ENCODE measurements at regions of chr3 and their contacts with region 1.

Region 1: DNA sequence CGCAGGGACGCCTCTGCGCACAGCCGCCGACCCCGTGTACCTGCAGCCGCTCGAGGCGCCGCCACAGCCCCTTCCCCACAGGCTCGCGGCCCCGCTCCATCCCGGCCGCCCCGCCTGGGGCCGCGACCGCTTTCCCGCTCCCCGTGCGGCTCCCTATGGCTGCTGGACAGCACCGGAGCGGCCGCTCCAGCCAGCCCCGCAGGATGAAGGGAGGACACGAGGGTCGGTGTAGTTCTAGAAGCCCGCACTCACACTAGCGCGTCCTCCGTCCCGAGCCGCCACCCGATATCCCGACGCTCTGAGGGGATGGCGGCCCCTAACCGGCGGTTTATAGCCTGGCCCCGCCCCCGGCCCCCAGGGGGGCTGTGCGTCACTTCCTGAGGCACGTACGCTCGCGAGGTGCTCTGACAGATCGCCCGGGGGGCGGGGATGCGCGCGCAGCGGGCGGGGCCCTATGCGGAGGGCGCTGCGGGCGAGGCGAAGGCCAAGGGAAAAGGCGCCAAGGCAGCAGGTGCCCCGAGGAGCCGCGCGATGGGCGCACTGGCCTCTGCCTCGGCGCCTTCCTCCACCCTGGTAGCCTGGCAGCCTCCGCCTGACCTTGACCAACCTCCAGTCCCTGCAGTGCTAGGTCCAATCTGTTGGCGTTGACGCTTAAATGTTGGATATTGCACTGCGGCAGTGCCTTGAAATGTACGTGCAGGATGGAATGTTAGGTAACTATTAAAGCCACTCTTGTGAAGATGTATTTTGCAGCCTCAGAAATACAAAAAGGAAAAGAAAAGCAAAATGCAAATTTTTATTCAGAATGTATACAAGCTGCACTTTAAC is at the start of gene TFRC:
- DNase-seq: peak; percentile 95
- H3K4me3 Mint-ChIP-seq: peak within 1 kb of the TSS; percentile 100
- H3K27ac Mint-ChIP-seq: peak within 1 kb of the TSS; percentile 98
- H3K4me1 Mint-ChIP-seq: peaks cover 38% of the 10 kb centered on the region
- H3K27me3 Mint-ChIP-seq: no peaks in the 10 kb centered on the region
- total RNA-seq, gene TFRC: 791 TPM in 2 replicates

Region 2: DNA sequence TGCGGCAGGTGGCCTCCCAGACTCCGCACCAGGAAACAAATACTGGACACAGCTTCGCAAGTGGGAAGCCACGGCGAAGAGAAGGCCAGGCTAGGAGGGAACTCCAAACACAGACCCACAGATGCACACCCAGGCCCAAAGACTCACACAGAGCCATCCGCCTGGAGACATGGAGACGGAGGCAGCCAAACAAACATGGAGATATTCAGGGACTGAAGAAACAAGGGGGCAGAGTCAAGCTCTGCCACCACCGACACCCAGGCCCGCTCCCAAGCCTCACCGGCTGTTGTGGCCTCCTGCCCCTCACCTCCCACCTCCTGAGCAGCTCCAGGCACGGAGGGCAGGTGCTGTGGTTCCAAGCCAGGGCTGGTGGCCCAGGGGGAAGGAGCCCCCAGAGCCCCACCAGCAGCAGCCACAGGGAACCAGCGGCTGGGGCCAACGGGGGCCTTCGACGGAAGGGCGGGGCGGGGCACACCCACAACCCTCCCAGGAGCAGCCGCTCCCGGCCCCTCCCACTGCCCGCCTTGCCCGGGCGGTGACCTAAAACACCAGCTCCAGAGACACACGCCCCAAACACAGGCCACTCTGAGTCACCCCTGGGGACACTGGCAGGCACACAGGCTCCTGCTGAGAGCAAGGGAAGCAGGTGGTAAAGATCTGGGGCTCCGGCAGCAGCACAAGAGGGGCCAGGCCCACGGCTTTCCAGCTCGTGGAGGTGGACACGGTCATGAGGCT is 205.5 kb before region 1 on chr3:
- intact Hi-C with region 1: no loop called
- DNase-seq: no peak
- H3K4me3 Mint-ChIP-seq: no peak overlapping the region
- H3K27ac Mint-ChIP-seq: no peak overlapping the region
- H3K4me1 Mint-ChIP-seq: no peaks in the 10 kb centered on the region
- H3K27me3 Mint-ChIP-seq: no peaks in the 10 kb centered on the region

Region 3: DNA sequence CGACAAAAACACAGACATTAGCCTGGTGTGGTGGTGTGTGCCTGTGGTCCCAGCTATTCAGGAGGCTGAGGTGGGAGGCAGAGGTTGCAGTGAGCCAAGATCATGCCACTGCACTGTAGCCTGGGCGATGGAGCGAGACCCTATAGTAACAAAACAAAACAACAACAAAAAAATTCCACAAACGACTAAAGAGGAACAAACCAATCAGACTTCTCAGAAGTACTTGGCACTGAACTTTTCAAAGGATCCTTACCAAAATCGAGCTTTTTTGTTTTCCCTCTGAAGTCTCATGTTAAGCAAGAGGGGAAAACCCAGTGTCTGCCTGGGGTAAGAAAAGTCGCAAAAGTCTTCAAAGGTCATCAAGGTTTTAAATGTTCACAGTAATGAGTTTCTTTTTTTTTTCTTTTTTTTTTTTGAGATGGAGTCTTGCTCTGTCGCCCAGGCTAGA is 30.0 kb after region 1 on chr3:
- intact Hi-C with region 1: loop called (anchors 1 kb)
- DNase-seq: peak; percentile 37
- H3K4me3 Mint-ChIP-seq: peak overlapping the region; percentile 47
- H3K27ac Mint-ChIP-seq: peak overlapping the region; percentile 96
- H3K4me1 Mint-ChIP-seq: peaks cover 27% of the 10 kb centered on the region
- H3K27me3 Mint-ChIP-seq: no peaks in the 10 kb centered on the region

Region 4: DNA sequence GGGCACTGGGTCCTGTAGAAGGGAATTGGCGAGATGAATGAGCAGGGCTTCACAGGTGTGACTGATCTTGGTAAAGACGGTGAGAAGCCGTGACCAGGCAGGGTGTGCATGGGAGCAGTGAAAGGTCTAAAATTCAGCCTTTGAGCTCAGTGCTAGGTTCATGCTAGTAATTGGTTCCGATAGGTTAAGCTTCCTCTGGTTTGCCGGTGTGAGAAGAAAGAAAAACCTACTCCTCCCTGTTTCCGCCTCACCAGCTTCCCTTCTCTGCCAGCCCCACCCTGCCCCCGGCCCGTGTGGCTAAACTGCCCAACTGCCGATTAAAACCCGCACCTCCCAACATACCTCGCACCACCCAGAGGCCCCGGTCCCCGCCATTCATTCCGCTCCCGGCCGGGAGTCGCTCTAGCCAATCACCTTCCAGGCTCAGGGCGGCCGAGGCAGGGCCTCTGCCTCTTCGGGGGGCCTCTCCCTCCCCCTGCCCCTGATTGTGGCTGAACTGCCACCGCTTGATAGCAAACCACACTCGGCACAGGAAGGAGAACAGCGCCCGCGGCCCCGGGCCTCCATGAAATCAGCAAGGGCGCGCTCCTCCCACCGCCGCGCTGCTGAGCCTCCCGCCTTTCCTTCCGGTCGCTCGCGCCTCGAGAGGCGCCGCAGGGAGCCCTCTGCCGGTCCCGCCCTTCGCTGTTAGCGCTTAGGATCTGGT is 550.2 kb after region 1 on chr3:
- intact Hi-C with region 1: loop called (anchors 1 kb)
- DNase-seq: peak; percentile 90
- H3K4me3 Mint-ChIP-seq: peak overlapping the region; percentile 86
- H3K27ac Mint-ChIP-seq: peak overlapping the region; percentile 93
- H3K4me1 Mint-ChIP-seq: peaks cover 52% of the 10 kb centered on the region
- H3K27me3 Mint-ChIP-seq: no peaks in the 10 kb centered on the region